ENCODE measurements at regions of chr4 and their contacts with region 1.

Region 1: GRCh38 chr4:38948551-38948950 is 80.9 kb downstream of the FAM114A1 start:
- DNase-seq: peak; percentile 94
- H3K4me3 ChIP-seq: peak overlapping the region; percentile 25
- H3K27ac ChIP-seq: peak overlapping the region; percentile 71
- H3K4me1 ChIP-seq: peaks cover 30% of the 10 kb centered on the region
- H3K27me3 ChIP-seq: no peaks in the 10 kb centered on the region

Region 2: DNA sequence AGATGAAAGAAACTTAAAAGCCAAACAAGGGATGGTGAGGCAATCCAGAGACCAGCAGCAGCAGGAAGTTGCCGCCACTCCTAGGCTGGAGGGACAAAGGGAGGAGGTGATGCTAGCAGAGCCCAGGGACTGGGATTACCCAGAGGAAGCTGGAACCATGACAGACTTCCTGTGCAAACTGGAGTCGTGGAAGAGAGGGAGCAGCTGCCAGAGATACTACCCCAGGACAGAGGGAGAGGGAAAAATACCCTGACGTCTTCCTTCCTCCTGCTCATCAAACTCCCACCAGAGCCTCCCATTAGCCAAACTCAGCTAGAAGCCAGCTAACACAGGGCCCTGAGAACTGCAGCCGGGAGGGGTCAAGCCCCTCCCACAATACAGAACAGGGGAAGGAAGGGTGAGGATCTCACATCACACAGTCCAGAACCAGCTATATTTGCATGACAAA is 385.8 kb before region 1 on chr4:
- in situ Hi-C with region 1: no loop called
- DNase-seq: peak; percentile 31
- H3K4me3 ChIP-seq: no peak overlapping the region
- H3K27ac ChIP-seq: no peak overlapping the region
- H3K4me1 ChIP-seq: peaks cover 16% of the 10 kb centered on the region
- H3K27me3 ChIP-seq: no peaks in the 10 kb centered on the region

Region 3: GRCh38 chr4:38710053-38710452 is 238.5 kb before region 1 on chr4:
- in situ Hi-C with region 1: no loop called
- DNase-seq: no peak
- H3K4me3 ChIP-seq: no peak overlapping the region
- H3K27ac ChIP-seq: no peak overlapping the region
- H3K4me1 ChIP-seq: peaks cover 6% of the 10 kb centered on the region
- H3K27me3 ChIP-seq: no peaks in the 10 kb centered on the region

Region 4: DNA sequence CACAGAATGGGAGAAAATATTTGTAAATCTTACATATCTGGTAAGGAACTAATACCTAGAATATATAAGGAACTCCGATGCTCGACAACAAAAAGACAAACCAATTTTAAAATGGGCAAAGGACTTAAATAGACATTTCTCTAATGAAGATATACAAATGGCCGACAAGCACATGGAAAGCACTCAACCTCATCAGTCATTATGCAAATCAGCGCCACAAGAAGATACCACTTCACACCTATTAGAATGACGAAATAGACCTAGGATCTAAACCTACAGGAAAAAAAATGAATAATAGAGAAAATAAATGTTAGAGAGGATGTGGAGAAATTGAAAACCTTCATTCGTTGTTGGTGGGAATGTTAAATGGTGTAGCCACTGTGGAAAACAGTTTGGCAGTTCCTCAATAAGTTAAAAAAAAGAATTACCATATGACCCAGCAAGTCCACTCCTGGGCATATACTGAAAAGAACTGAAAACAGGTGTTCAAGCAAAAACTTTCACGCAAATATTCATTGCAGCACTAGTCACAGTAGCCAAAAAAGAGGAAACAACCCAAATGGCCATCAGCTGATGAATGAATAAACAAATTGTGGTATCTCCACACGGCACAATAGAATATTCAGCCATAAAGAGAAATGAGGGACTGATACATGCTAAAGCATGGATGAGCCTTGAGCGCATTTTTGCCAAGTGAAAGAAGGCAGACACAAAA is 176.5 kb after region 1 on chr4:
- in situ Hi-C with region 1: loop called (anchors 25 kb)
- DNase-seq: no peak
- H3K4me3 ChIP-seq: no peak overlapping the region
- H3K27ac ChIP-seq: no peak overlapping the region
- H3K4me1 ChIP-seq: no peaks in the 10 kb centered on the region
- H3K27me3 ChIP-seq: no peaks in the 10 kb centered on the region